PC-3 (cell line): ENCODE measurements at regions of chr15 and their contacts with region 1.

Region 1: GRCh38 chr15:98896802-98897732 is 110.5 kb downstream of the PGPEP1L start:
- DNase-seq: peak; percentile 97
- ATAC-seq: peak; percentile 77
- H3K4me3 ChIP-seq: peak overlapping the region; percentile 49
- H3K27ac ChIP-seq: peak overlapping the region; percentile 99
- H3K4me1 ChIP-seq: peaks cover 35% of the 10 kb centered on the region
- H3K27me3 ChIP-seq: no peaks in the 10 kb centered on the region
- CTCF ChIP-seq: no peak

Region 2: GRCh38 chr15:98873441-98874201 is 23.4 kb before region 1 on chr15:
- CTCF ChIA-PET with region 1: no interaction called
- POLR2A ChIA-PET with region 1: no interaction called
- intact Hi-C with region 1: loop called (anchors 1 kb)
- DNase-seq: peak; percentile 94
- ATAC-seq: peak; percentile 80
- H3K4me3 ChIP-seq: peak overlapping the region; percentile 55
- H3K27ac ChIP-seq: peak overlapping the region; percentile 94
- H3K4me1 ChIP-seq: peaks cover 54% of the 10 kb centered on the region
- H3K27me3 ChIP-seq: no peaks in the 10 kb centered on the region
- CTCF ChIP-seq: peak; percentile 47

Region 3: GRCh38 chr15:98966091-98966787 is 69.2 kb after region 1 on chr15:
- CTCF ChIA-PET with region 1: no interaction called
- POLR2A ChIA-PET with region 1: no interaction called
- intact Hi-C with region 1: no loop called
- DNase-seq: no peak
- ATAC-seq: no peak
- H3K4me3 ChIP-seq: no peak overlapping the region
- H3K27ac ChIP-seq: no peak overlapping the region
- H3K4me1 ChIP-seq: no peaks in the 10 kb centered on the region
- H3K27me3 ChIP-seq: no peaks in the 10 kb centered on the region
- CTCF ChIP-seq: no peak

Region 4: GRCh38 chr15:98996169-98996568 is 99.1 kb after region 1 on chr15:
- CTCF ChIA-PET with region 1: no interaction called
- POLR2A ChIA-PET with region 1: no interaction called
- intact Hi-C with region 1: no loop called
- DNase-seq: no peak
- ATAC-seq: no peak
- H3K4me3 ChIP-seq: no peak overlapping the region
- H3K27ac ChIP-seq: no peak overlapping the region
- H3K4me1 ChIP-seq: no peaks in the 10 kb centered on the region
- H3K27me3 ChIP-seq: no peaks in the 10 kb centered on the region
- CTCF ChIP-seq: no peak

Region 5: DNA sequence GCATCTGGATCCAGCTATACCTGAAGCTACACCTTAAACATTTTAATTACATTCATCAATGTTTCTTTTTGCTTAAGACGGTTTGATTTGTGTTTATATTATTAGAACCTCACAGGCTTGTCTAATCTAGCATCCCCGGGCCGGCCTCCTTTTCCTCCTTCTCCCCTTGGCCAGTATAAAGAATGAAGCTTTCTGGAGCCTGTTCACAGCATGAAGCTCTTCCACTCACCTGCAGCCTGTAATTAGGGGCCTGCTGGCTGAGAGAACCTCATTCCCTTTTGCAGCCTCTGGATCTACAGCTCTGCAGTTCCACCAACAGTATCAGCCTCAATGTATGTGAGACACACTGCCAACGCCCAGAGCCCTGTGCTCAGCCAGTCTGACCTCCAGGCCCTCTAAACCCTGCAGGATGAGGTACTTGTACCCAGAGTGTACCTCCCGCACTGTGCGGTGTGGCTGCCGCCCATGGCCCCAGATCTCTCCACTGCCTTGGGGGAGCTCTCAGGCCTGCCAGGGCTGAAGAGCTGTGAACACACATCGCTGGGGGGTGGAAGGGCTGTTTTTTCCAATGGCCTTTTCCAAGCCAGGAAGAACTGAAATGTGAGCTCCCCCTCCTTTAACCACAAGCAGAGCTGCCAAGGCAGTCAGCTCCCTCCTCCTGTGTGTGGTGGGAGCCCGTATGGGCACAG is 1867.9 kb after region 1 on chr15:
- CTCF ChIA-PET with region 1: no interaction called
- POLR2A ChIA-PET with region 1: no interaction called
- intact Hi-C with region 1: no loop called
- DNase-seq: peak; percentile 35
- ATAC-seq: peak; percentile 45
- H3K4me3 ChIP-seq: no peak overlapping the region
- H3K27ac ChIP-seq: no peak overlapping the region
- H3K4me1 ChIP-seq: peaks cover 14% of the 10 kb centered on the region
- H3K27me3 ChIP-seq: no peaks in the 10 kb centered on the region
- CTCF ChIP-seq: no peak